ENCODE measurements at regions of chr6 and their contacts with region 1.

Region 1: DNA sequence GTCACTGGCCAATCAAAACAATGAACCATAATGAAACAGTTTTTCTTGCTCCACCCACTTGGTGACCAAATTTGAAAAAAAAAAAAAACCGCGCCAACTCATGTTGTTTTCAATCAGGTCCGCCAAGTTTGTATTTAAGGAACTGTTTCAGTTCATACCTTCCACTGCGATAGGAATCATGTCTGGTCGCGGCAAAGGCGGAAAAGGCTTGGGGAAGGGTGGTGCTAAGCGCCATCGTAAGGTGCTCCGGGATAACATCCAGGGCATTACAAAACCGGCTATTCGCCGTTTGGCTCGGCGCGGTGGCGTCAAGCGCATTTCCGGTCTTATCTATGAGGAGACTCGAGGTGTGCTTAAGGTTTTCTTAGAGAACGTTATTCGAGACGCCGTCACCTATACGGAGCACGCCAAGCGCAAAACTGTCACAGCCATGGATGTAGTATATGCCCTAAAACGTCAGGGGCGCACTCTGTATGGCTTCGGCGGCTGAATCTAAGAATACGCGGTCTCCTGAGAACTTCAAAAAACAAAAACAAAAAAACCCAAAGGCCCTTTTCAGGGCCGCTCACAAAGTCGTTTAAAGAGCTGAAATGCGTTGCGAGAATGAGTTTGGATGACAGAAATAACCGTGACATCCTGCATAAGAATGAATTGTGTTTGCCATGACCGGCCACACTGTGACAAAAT is 16.7 kb downstream of the HFE start:
- DNase-seq: peak; percentile 91
- H3K4me3 Mint-ChIP-seq: peak overlapping the region; percentile 82
- H3K27ac Mint-ChIP-seq: peak overlapping the region; percentile 99
- H3K4me1 Mint-ChIP-seq: peaks cover 28% of the 10 kb centered on the region
- H3K27me3 Mint-ChIP-seq: no peaks in the 10 kb centered on the region
- CTCF ChIP-seq: peak; percentile 56

Region 2: DNA sequence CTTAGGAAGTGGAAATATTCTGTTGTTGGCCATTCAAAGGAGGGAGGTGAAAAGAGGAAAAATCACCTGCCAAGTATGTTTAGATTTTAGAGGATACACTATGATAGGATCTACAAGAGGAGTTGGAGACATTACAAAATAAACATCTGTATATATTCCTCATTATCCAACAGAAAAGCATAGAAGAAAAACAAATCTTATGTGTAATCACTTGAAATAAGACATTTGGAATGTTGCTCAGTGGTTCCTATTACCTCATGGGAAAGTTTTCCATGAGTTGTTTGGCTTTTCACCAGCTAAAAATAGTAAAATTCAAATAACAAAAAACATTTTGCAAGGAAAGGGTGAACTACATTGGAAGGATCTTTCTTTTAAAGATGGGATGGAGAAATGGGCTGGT is 901.4 kb before region 1 on chr6:
- CTCF ChIA-PET with region 1: no interaction called
- intact Hi-C with region 1: no loop called
- DNase-seq: no peak
- H3K4me3 Mint-ChIP-seq: no peak overlapping the region
- H3K27ac Mint-ChIP-seq: no peak overlapping the region
- H3K4me1 Mint-ChIP-seq: no peaks in the 10 kb centered on the region
- H3K27me3 Mint-ChIP-seq: no peaks in the 10 kb centered on the region
- CTCF ChIP-seq: no peak

Region 3: GRCh38 chr6:26065952-26066380 is 37.9 kb before region 1 on chr6:
- CTCF ChIA-PET with region 1: interaction called, 4 read pairs
- intact Hi-C with region 1: loop called (anchors 1 kb)
- DNase-seq: peak; percentile 86
- H3K4me3 Mint-ChIP-seq: peak overlapping the region; percentile 32
- H3K27ac Mint-ChIP-seq: peak overlapping the region; percentile 43
- H3K4me1 Mint-ChIP-seq: peaks cover 21% of the 10 kb centered on the region
- H3K27me3 Mint-ChIP-seq: no peaks in the 10 kb centered on the region
- CTCF ChIP-seq: peak; percentile 73

Region 4: GRCh38 chr6:26088344-26088743 is 15.6 kb before region 1 on chr6:
- CTCF ChIA-PET with region 1: interaction called, 13 read pairs
- intact Hi-C with region 1: no loop called
- DNase-seq: no peak
- H3K4me3 Mint-ChIP-seq: peak overlapping the region; percentile 93
- H3K27ac Mint-ChIP-seq: peak overlapping the region; percentile 87
- H3K4me1 Mint-ChIP-seq: peaks cover 23% of the 10 kb centered on the region
- H3K27me3 Mint-ChIP-seq: no peaks in the 10 kb centered on the region
- CTCF ChIP-seq: no peak

Region 5: DNA sequence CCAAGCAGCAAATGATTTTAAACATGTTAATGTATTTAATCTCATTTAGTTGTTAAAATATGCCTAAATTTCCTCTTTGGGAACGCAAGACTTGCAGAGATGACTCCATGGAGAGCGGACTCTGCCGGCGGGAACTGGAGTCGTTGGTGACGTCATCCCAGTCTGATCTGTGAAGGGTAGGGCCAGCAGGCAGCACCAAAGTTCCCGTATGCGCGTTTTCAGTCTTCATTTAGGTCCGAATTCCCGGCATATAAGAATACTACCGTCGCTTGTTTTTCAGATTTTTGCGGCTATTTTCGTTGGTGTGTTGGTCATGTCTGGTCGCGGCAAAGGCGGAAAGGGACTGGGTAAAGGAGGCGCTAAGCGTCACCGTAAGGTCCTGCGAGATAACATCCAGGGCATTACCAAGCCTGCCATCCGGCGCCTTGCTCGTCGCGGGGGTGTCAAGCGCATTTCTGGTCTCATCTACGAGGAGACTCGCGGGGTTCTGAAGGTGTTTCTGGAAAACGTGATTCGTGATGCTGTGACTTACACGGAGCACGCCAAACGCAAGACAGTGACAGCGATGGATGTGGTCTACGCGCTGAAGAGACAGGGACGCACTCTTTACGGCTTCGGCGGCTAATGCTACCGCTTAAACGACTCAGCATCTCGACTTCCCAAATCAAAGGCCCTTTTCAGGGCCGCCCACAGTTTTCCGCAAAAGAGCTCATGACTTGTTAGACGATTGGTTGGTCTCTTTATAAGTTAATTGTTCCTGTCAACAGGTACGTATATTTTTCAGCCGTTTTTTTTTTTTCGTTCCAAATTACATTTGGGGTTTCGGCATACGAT is 100.6 kb after region 1 on chr6:
- CTCF ChIA-PET with region 1: no interaction called
- intact Hi-C with region 1: loop called (anchors 2 kb)
- DNase-seq: peak; percentile 94
- H3K4me3 Mint-ChIP-seq: no peak overlapping the region
- H3K27ac Mint-ChIP-seq: no peak overlapping the region
- H3K4me1 Mint-ChIP-seq: peaks cover 19% of the 10 kb centered on the region
- H3K27me3 Mint-ChIP-seq: no peaks in the 10 kb centered on the region
- CTCF ChIP-seq: no peak

Measured in Calu3 (cell line).